Sigmoid colon (tissue), 7 donors: ENCODE measurements at regions of chr17 and their contacts with region 1.

Region 1: DNA sequence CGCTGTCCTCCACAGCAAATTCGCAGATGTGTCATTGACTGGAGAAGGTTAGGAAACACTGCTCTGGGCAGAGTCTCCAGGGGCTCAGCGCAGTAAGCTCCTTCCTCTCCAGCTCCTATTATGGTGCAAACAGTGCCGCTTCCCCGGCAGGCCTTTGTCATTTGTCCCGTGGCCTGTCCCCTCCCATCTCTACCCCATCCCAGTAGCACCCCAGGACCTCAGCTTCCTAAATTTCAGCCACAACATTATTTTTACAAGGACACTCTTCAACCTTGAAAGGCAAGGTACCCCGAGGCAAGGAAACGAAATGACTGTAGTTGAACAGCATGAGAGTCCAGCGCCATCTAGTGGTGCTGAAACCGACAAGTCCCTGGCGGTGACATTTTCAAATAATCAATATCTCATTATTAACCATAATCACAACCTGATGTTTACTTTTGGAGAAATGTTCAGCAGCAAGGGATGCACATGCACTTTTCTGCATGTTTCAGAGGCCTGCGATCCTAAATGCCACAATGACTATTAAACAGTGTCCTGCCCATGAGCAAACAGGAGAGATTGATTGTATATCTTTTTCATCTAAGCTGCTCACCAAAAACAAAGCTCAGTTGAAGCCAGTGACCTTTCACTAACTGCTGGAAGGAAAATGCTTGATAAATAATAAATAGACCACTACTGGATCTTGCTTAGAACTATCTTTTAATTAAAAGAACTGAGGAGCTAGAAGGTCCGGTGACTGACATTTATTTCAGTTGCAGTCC is 16.5 kb downstream of the MRPS23 start:
- DNase-seq: peak; percentile 86
- H3K4me3 ChIP-seq: peak overlapping the region; percentile 27 to 50 (median 45)
- H3K27ac ChIP-seq: peak overlapping the region; percentile 78 to 83 (median 82)
- H3K4me1 ChIP-seq: peaks cover 0 to 22% (median 18%) of the 10 kb centered on the region in 4 donors
- H3K27me3 ChIP-seq: no peaks in the 10 kb centered on the region
- CTCF ChIP-seq: peak; percentile 84 to 94 (median 90)
- EP300 ChIP-seq: no peak
- POLR2A ChIP-seq: no peak

Region 2: DNA sequence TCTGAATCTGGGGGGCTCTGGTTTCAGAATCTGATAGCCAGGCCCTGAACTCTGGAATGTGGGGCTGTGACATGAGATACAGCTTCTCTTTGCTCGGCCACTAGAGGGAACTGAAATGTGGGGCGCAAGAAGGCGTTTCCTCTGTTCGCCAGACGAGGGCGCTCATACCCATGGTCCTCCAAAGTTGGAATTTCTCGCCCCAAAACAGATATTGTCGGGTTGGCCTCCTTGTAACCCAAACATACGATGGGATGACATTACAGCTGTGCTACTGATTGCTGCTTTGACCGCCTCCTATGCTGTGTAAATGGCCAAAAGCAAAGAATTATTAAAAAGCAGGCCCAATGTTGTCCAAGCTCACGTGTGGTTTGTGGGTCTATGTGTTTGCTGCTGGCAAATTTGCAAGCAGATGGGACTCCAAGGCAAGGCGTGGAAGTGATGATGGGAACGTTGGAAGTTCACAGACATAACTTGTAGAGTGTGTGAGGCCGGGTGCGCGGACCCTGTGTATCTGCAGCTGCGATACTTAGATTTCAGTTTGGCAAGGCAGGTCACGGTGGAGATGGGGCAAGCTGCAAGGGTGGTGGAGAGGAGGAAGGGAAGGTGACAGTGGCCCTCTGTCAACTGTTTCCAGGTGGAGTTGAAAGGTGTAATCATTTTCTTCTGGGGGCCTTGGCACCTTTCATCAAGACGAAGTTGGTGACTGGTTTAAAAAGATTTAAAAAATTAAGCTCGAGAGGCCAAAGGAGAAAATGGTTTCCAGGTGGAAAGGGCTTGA is 590.0 kb before region 1 on chr17:
- intact Hi-C with region 1: loop called (anchors 5 kb)
- DNase-seq: peak; percentile 81
- H3K4me3 ChIP-seq: no peak overlapping the region
- H3K27ac ChIP-seq: no peak overlapping the region
- H3K4me1 ChIP-seq: no peaks in the 10 kb centered on the region
- H3K27me3 ChIP-seq: no peaks in the 10 kb centered on the region
- CTCF ChIP-seq: peak; percentile 96 to 99 (median 98)
- EP300 ChIP-seq: no peak
- POLR2A ChIP-seq: no peak

Region 3: DNA sequence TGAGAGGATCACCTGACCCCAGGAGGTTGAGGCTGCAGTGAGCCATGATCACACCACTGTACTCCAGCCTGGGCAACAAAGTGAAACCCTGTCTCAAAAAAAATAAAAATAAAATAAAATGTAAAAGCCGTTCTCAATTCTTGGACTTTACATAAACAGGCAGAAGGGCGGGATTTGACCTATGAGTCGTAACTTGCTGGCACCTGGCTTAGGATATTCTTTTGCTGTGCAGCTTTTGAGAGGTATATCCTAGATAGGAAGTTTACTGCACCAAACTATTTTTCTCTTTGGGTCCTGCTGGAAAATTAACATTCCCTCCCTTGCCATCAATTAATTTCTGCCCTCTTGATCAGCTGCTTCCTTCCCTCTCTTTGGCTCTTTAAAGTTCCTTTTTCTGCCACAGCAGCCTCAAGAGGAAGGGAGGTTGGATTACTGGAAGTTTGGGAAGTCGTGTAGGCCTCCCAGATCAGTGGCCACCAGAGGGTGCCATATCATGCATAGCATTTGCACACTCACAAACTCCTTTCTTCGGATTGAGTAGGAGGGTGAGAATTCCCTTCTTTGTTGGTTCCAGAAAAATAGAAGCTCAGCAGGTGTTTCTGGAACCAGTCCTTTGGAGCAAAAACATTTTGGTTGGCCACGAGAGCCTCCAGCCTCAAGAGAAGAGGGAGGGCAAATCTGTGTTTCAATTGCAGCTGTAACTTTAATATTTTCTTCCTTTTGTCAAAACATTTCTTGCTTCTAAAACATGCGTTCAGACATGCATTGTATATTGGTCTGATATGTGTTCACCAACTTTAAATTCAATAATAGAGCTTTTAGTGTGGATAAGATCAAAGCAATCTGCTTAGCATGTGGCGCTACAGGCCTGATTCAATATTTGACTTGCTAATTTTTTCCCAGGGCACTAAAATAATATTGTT is 235.6 kb before region 1 on chr17:
- intact Hi-C with region 1: loop called (anchors 5 kb)
- DNase-seq: no peak
- H3K4me3 ChIP-seq: no peak overlapping the region
- H3K27ac ChIP-seq: peak overlapping the region in 1 of 4 donors; percentile 29
- H3K4me1 ChIP-seq: peaks cover 0 to 4% (median 2%) of the 10 kb centered on the region in 4 donors
- H3K27me3 ChIP-seq: no peaks in the 10 kb centered on the region
- CTCF ChIP-seq: peak in 3 of 4 experiments; percentile 70 to 73 (median 73)
- EP300 ChIP-seq: no peak
- POLR2A ChIP-seq: no peak

Region 4: GRCh38 chr17:57671667-57672632 is 161.4 kb before region 1 on chr17:
- intact Hi-C with region 1: loop called (anchors 5 kb)
- DNase-seq: peak; percentile 89
- H3K4me3 ChIP-seq: no peak overlapping the region
- H3K27ac ChIP-seq: no peak overlapping the region
- H3K4me1 ChIP-seq: peaks cover 0 to 11% (median 5%) of the 10 kb centered on the region in 4 donors
- H3K27me3 ChIP-seq: no peaks in the 10 kb centered on the region
- CTCF ChIP-seq: peak; percentile 73 to 90 (median 81)
- EP300 ChIP-seq: no peak
- POLR2A ChIP-seq: no peak

Region 5: GRCh38 chr17:57849874-57850754 is 16.8 kb after region 1 on chr17 and contains the start of gene MRPS23:
- intact Hi-C with region 1: loop called (anchors 2 kb)
- DNase-seq: peak; percentile 100
- H3K4me3 ChIP-seq: peak within 1 kb of the TSS; percentile 63 to 97 (median 85)
- H3K27ac ChIP-seq: peak within 1 kb of the TSS; percentile 88 to 97 (median 94)
- H3K4me1 ChIP-seq: peaks cover 0 to 65% (median 55%) of the 10 kb centered on the region in 4 donors
- H3K27me3 ChIP-seq: no peaks in the 10 kb centered on the region
- CTCF ChIP-seq: no peak
- EP300 ChIP-seq: peak in 1 of 4 donors; percentile 79
- POLR2A ChIP-seq: peak; percentile 91 to 93
- total RNA-seq, gene MRPS23: 9.5 to 15.1 (median 13.3) TPM